Naive thymus-derived CD4-positive, alpha-beta T cell (primary cell): ENCODE measurements at regions of chr3 and their contacts with region 1.

Region 1: DNA sequence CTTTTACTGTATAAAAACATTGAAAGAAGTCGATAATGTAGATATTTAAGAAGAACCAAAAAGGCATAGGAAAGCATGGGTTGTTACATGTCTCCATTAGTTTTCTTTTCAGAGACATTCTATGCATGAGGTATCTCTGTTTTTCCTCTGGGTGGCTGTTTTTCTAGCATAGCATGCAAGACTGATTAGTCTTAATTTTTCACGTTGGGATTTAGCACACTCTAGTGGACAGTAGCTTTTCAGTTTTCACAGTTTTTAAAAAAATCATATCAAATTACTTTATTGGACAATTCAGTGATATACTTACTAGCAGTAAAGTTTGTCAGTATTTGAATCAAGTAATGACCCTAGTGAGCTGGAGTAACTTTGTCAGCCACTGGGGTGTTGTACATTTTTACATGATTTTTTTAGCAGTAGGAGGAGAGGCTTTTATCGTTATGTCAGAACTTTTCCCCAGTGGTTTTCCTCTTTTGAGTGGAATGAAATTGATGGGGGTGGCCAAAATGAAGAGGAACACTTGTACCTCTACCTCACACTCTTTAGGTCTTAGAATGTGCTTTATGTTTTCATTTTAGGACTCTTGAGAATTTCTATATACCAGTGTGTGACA is 57.2 kb downstream of the SEC22A start:
- DNase-seq: peak in 5 of 9 donors; percentile 13 to 32 (median 21)
- ATAC-seq: peak; percentile 78
- H3K4me3 ChIP-seq: no peak overlapping the region
- H3K4me3 Mint-ChIP-seq: no peak overlapping the region
- H3K27ac ChIP-seq: no peak overlapping the region
- H3K27ac Mint-ChIP-seq: peak overlapping the region in 1 of 9 donors; percentile 74
- H3K4me1 ChIP-seq: no peaks in the 10 kb centered on the region
- H3K4me1 Mint-ChIP-seq: peaks cover 0 to 11% (median 0%) of the 10 kb centered on the region in 7 donors
- H3K27me3 ChIP-seq: no peaks in the 10 kb centered on the region
- H3K27me3 Mint-ChIP-seq: no peaks in the 10 kb centered on the region

Region 2: DNA sequence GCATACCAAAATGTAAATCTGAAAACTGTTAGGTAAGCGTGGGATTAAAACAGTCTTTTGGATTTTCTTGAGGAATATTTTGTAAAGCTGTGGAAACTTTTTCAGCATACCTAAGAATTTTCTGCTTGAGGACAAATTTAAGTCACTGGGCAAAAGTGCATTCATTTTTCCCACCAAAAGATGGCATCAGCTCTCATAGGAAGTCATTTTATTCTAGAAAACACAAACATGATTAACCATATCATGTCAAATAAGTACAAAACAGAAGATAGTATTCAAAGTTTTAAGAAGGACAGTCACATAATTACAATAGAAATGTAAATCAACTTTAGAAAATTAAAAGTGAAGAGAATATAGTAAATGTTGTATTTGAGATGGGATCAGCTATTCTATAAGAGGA is 400.5 kb before region 1 on chr3:
- CTCF ChIA-PET with region 1: no interaction called
- POLR2A ChIA-PET with region 1: no interaction called
- intact Hi-C with region 1: loop called in 1 of 2 experiments (anchors 10 kb)
- DNase-seq: no peak
- ATAC-seq: no peak
- H3K4me3 ChIP-seq: no peak overlapping the region
- H3K4me3 Mint-ChIP-seq: no peak overlapping the region
- H3K27ac ChIP-seq: no peak overlapping the region
- H3K27ac Mint-ChIP-seq: no peak overlapping the region
- H3K4me1 ChIP-seq: no peaks in the 10 kb centered on the region
- H3K4me1 Mint-ChIP-seq: peaks cover 0 to 2% (median 0%) of the 10 kb centered on the region in 7 donors
- H3K27me3 ChIP-seq: no peaks in the 10 kb centered on the region
- H3K27me3 Mint-ChIP-seq: no peaks in the 10 kb centered on the region

Region 3: GRCh38 chr3:122942937-122943827 is 315.7 kb before region 1 on chr3:
- CTCF ChIA-PET with region 1: no interaction called
- POLR2A ChIA-PET with region 1: no interaction called
- intact Hi-C with region 1: loop called (anchors 2 kb)
- DNase-seq: peak in 1 of 9 donors; percentile 57
- ATAC-seq: peak; percentile 21
- H3K4me3 ChIP-seq: no peak overlapping the region
- H3K4me3 Mint-ChIP-seq: peak overlapping the region in 1 of 10 donors; percentile 39
- H3K27ac ChIP-seq: no peak overlapping the region
- H3K27ac Mint-ChIP-seq: no peak overlapping the region
- H3K4me1 ChIP-seq: peaks cover 0 to 13% of the 10 kb centered on the region in 2 donors
- H3K4me1 Mint-ChIP-seq: peaks cover 0 to 3% (median 0%) of the 10 kb centered on the region in 7 donors
- H3K27me3 ChIP-seq: no peaks in the 10 kb centered on the region
- H3K27me3 Mint-ChIP-seq: peaks cover 0 to 13% (median 6%) of the 10 kb centered on the region in 5 donors